ENCODE measurements at regions of chr1 and their contacts with region 1.

Region 1: DNA sequence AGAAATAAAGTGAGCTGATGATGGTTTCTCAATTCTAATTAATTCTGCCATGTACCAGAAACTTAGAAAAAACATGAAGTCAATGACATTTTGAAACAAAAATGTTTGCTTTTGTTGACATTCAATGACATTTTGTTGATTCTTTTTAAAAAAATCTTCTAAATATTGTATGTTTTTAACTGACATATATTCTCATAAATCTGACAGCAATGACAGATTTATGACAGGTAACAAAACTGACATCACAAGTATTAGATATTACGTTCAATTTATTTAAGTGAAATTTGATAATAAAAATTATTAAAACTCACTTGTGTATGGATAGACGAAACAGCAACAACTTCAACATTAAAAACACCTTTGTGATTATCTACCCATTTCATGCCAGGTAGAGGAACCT is 36.0 kb upstream of the ANGPTL3 start:
- DNase-seq: no peak
- H3K4me3 ChIP-seq: no peak overlapping the region
- CTCF ChIP-seq: no peak
- POLR2A ChIP-seq: no peak

Region 2: GRCh38 chr1:62746085-62746808 is 184.9 kb after region 1 on chr1:
- intact Hi-C with region 1: loop called (anchors 10 kb)
- DNase-seq: no peak
- H3K4me3 ChIP-seq: no peak overlapping the region
- CTCF ChIP-seq: no peak
- POLR2A ChIP-seq: no peak

Region 3: GRCh38 chr1:63024132-63024531 is 462.8 kb after region 1 on chr1:
- intact Hi-C with region 1: no loop called
- DNase-seq: no peak
- H3K4me3 ChIP-seq: no peak overlapping the region
- CTCF ChIP-seq: no peak
- POLR2A ChIP-seq: no peak